Common myeloid progenitor, CD34-positive (primary cell): ENCODE measurements at regions of chr15 and their contacts with region 1.

Region 1: DNA sequence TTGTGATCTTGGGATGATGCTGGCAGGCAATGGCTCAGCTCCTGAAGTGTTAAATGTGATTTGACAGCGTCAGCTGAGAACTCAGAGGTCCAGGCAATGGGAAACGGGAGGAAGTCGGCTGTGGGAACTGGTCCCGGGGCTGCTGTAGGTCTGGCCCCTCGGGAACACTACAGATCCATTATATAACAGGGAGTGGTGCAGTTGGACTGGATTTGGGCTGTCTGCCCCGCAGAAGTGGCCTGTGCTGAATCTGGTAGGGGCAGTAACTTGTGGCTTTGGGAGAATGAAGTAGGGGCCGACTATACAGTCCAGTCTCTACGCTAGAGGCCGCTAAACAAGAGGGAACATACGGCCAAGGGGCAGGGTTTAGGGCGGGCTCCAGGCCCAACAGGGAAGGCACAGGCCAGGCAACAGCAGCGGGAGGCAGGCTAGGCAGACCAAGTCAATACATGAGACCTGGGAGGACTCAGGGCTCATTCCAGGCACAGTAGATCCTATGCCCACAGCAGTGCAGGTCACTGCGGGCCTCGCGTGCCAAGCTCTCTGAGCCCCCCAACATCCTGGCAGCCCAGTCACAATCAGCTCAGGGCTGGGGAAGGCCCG is 20.3 kb upstream of the IL16 start:
- DNase-seq: no peak
- H3K4me3 ChIP-seq: no peak overlapping the region
- H3K27ac ChIP-seq: no peak overlapping the region
- H3K4me1 ChIP-seq: no peaks in the 10 kb centered on the region
- H3K27me3 ChIP-seq: peaks cover 0 to 3% (median 0%) of the 10 kb centered on the region in 5 experiments

Region 2: DNA sequence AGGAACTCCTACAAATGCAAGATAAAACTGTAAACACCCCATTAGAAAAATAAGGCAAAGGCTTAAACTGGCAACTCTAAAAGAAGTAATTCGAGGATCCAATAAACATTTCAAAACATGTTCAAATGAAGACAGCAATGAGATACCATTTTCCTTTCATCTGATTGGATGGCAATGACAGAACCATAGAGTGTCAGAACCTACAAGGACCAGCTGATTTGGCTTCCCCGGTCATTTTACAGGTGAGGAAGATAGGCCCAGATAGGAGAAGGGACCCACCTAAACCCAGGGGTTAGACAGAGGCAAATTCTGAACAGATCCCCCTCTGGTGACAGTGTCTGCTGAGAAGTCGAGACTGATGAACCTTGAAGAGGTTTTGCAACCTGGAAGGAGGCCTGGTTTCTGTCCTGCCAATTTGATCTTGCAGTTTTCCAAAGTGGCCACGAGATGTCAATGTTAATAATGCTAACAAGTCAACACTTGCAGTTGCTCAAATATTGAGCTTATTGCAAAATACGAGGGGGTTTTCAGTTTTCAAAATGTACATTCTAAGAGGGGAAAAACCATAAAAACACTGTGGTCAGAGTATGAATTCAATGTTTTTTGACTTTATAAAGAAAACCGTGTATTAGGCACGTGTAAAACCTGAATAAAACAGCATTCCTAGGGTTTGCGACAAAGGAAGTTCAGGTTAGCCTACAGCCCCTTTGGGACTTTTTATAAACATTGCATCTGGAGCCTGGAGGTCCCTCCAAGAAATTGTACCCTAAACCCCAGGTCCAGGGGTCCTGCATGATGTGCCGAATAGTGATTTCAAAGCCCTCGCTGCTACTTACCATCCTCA is 20.8 kb before region 1 on chr15:
- CTCF ChIA-PET with region 1: interaction called, 12 read pairs
- POLR2A ChIA-PET with region 1: no interaction called
- DNase-seq: peak; percentile 65 to 81 (median 79)
- H3K4me3 ChIP-seq: peak overlapping the region in 1 of 7 experiments; percentile 13
- H3K27ac ChIP-seq: no peak overlapping the region
- H3K4me1 ChIP-seq: peaks cover 0 to 13% (median 3%) of the 10 kb centered on the region in 4 experiments
- H3K27me3 ChIP-seq: peaks cover 0 to 4% (median 0%) of the 10 kb centered on the region in 5 experiments

Region 3: GRCh38 chr15:81163961-81164800 is 12.2 kb before region 1 on chr15:
- CTCF ChIA-PET with region 1: interaction called, 11 read pairs
- POLR2A ChIA-PET with region 1: no interaction called
- DNase-seq: peak; percentile 65 to 89 (median 85)
- H3K4me3 ChIP-seq: no peak overlapping the region
- H3K27ac ChIP-seq: no peak overlapping the region
- H3K4me1 ChIP-seq: peaks cover 7 to 37% (median 36%) of the 10 kb centered on the region in 4 experiments
- H3K27me3 ChIP-seq: no peaks in the 10 kb centered on the region